ENCODE measurements at regions of chr1 and their contacts with region 1.

Region 1: DNA sequence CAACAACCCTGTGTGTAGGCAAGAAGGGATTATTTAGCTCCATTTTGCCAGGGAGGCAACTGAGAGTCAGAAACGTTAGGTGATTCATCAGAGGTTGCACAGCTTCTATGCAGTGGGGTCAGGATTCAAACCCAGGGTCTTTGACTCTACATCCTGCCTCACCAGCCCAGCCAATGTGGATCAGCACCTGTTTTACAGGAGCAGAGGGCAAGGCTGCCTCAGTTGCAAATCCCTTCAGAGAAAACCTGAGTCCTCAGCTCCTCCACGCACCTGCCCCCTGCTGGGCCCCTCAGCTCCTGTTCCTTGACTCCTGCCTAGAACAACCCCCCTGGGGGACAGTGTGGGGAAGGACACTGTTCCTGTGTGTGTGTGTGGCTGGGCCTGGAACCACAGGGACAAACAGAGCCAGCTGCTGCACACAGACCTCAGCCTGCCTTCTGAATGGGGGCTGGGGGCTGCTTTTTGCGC is 61.6 kb downstream of the LRRN2 start:
- DNase-seq: peak; percentile 63
- ATAC-seq: peak; percentile 65
- H3K4me3 Mint-ChIP-seq: no peak overlapping the region
- H3K27ac Mint-ChIP-seq: no peak overlapping the region
- H3K4me1 Mint-ChIP-seq: peaks cover 29% of the 10 kb centered on the region
- H3K27me3 Mint-ChIP-seq: no peaks in the 10 kb centered on the region; the same call in 1 of the 2 replicates
- CTCF ChIP-seq: no peak

Region 2: GRCh38 chr1:204600968-204601367 is 23.0 kb before region 1 on chr1:
- CTCF ChIA-PET with region 1: interaction called, 13 read pairs
- POLR2A ChIA-PET with region 1: no interaction called
- DNase-seq: peak; percentile 45
- ATAC-seq: peak; percentile 82
- H3K4me3 Mint-ChIP-seq: no peak overlapping the region
- H3K27ac Mint-ChIP-seq: no peak overlapping the region
- H3K4me1 Mint-ChIP-seq: peaks cover 33% of the 10 kb centered on the region
- H3K27me3 Mint-ChIP-seq: peaks cover 5% of the 10 kb centered on the region
- CTCF ChIP-seq: peak; percentile 30; the same call in 1 of the 2 replicates

Region 3: DNA sequence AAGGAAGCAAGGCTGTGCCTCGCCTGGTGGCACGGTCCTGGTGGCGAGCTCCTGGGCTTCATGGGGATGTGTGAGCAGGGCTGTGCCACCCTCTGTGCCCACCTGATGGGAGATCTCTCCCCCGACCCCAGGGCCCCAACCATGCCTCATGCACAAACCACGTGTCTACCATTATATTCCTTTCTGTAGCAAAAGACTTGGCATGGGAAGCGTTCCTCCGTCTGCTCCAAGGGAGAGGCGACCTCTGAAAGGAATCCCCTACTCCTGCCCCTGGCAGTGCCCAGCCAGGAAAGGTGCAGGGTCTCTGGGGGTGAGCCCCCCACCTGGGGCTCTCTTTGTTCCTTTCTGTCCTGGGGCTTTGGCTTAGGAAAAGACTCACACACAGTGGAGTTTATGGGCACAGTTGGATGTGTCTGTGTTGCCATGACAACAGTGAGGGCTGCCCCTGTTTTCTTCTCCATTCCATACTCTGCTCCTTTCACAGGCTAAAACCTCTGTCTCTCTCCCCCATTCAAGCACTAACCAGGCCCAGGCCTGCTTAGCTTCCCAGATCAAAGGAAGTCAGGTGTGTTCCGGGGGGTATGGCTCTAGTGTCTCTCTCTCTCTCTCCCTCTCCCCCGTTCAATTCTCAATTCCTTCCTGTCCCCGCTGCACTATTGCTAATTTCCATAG is 83.0 kb after region 1 on chr1:
- CTCF ChIA-PET with region 1: interaction called, 10 read pairs
- POLR2A ChIA-PET with region 1: interaction called, 3 read pairs
- DNase-seq: peak; percentile 52
- ATAC-seq: peak; percentile 20
- H3K4me3 Mint-ChIP-seq: 0 out of 2 replicates have a peak overlapping the region, but pooled peaks have one; percentile 4
- H3K27ac Mint-ChIP-seq: no peak overlapping the region
- H3K4me1 Mint-ChIP-seq: peaks cover 63% of the 10 kb centered on the region
- H3K27me3 Mint-ChIP-seq: peaks cover 93% of the 10 kb centered on the region
- CTCF ChIP-seq: no peak

Measured in WTC11 (cell line).